ENCODE measurements at regions of chr14 and their contacts with region 1.

Region 1: DNA sequence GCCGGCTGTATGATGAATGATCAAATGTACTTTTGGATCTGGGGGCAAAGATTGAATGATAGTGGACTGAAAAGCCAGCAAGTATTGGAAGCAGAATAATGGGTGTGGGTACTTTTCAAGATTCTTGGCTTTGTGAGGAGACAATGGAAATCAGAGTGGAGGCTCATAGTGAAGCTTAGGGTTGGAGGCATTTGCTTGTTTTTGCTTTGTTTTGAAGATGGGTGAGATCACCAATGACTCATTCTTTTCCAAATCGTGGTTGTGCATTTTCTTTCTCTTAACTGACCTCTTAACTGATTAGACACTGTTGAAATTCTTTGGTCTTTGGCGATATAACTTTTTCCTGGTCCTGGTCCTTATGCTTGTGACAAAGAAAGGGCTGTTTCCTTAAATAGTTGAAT is 54.4 kb downstream of the PELI2 start:
- DNase-seq: no peak
- H3K4me3 Mint-ChIP-seq: peak overlapping the region; percentile 62
- H3K27ac Mint-ChIP-seq: peak overlapping the region; percentile 80
- H3K4me1 Mint-ChIP-seq: peaks cover 58% of the 10 kb centered on the region
- H3K27me3 Mint-ChIP-seq: no peaks in the 10 kb centered on the region

Region 2: GRCh38 chr14:56004786-56005185 is 167.8 kb before region 1 on chr14:
- intact Hi-C with region 1: loop called (anchors 10 kb)
- DNase-seq: peak; percentile 6
- H3K4me3 Mint-ChIP-seq: no peak overlapping the region
- H3K27ac Mint-ChIP-seq: no peak overlapping the region
- H3K4me1 Mint-ChIP-seq: peaks cover 38% of the 10 kb centered on the region
- H3K27me3 Mint-ChIP-seq: peaks cover 32% of the 10 kb centered on the region

Region 3: GRCh38 chr14:56129933-56130332 is 42.6 kb before region 1 on chr14:
- intact Hi-C with region 1: loop called (anchors 2 kb)
- DNase-seq: no peak
- H3K4me3 Mint-ChIP-seq: no peak overlapping the region
- H3K27ac Mint-ChIP-seq: no peak overlapping the region
- H3K4me1 Mint-ChIP-seq: peaks cover 19% of the 10 kb centered on the region
- H3K27me3 Mint-ChIP-seq: peaks cover under 1% of the 10 kb centered on the region

Region 4: GRCh38 chr14:56195704-56196103 is 23.1 kb after region 1 on chr14:
- intact Hi-C with region 1: loop called (anchors 2 kb)
- DNase-seq: no peak
- H3K4me3 Mint-ChIP-seq: peak overlapping the region; percentile 68
- H3K27ac Mint-ChIP-seq: peak overlapping the region; percentile 83
- H3K4me1 Mint-ChIP-seq: peaks cover 22% of the 10 kb centered on the region
- H3K27me3 Mint-ChIP-seq: no peaks in the 10 kb centered on the region

Measured in activated T-helper 1 cell treated with anti-CD3 and anti-CD28 coated beads, Interleukin-12 subunit alpha, Interleukin-12 subunit beta, Interleukin-2, Interleukin-4 antibody, amounts not matched to agents 30 ng/mL and 10 ng/mL and 1 ng/mL, durations not matched to agents 14 hours and 24 hours and 36 hours (primary cell).